Right ventricle myocardium superior (tissue), 1 donor: ENCODE measurements at regions of chr17 and their contacts with region 1.

Region 1: GRCh38 chr17:54280741-54281140 is 458.0 kb downstream of the KIF2B start:
- DNase-seq: no peak
- ATAC-seq: no peak

Region 2: DNA sequence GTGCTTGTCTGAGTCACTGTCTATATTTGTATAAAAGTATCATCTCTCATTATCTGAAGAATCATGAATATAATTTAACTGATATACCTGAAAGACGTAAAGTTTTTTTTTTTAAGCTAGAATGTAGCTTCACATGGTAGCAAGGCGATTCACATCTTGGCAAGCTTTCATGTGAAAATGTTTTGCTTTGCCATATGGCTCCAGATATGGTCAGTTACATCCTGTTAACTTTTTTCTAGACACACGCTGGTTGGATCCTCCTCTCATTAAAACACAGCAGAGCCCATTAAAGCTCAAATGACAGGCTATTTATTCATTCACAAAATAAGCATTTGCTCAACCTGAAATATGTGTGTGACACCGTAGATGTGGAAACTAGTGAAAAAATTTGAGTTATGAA is 45.2 kb before region 1 on chr17:
- intact Hi-C with region 1: loop called (anchors 5 kb)
- DNase-seq: no peak
- ATAC-seq: no peak